ENCODE measurements at regions of chr14 and their contacts with region 1.

Region 1: DNA sequence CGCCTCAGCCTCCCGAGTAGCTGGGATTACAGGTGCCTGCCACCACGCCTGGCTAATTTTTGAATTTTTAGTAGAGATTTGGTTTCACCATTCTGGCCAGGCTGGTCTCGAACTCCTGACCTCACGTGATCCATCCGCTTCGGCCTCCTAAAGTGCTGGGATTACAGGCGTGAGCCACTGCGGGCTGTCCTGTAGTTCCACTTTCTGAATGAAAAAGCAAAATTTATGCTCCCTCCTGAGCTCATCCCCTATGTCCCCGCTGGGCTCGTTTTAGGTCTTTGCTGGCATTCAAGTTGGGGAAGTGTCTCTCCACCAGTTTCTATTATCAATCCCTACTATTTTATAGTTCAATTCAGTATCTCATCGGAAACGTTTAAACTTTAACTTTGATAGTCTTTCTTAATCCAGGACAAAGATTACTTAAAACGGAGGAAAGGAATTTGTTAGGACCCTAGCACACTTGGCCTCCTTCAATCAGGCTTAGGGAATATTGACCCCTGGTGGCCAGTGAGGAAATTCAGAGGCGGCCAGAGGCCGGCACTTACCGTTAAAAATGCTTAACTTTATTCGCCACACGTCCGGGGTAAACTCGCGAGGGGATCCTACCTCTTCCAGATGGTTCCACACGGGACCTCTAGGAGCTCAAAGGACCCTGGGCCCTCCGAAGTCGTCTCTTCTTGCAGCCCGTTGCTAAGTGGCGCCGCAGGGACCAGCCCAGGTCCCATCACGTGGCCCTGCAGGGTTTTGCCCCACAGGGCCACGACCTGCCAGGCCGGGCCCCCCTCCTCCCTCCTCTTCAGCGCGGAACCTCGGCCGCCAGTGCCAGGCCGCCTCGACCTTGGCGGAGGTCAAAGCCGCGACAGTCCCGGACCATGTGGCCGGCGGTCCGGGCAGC is 11.4 kb upstream of the DNAL1 start:
- DNase-seq: peak; percentile 59
- ATAC-seq: peak; percentile 88
- H3K4me3 ChIP-seq: peak overlapping the region; percentile 49 to 68 (median 51)
- H3K27ac ChIP-seq: no peak overlapping the region
- H3K4me1 ChIP-seq: peaks cover 32% of the 10 kb centered on the region
- H3K27me3 ChIP-seq: no peaks in the 10 kb centered on the region
- CTCF ChIP-seq: peak; percentile 83
- EP300 ChIP-seq: no peak
- POLR2A ChIP-seq: no peak
- RAD21 ChIP-seq: peak; percentile 81

Region 2: GRCh38 chr14:73452341-73453186 is 180.8 kb before region 1 on chr14:
- CTCF ChIA-PET with region 1: no interaction called
- POLR2A ChIA-PET with region 1: no interaction called
- in situ Hi-C with region 1: no loop called
- intact Hi-C with region 1: no loop called
- DNase-seq: no peak
- ATAC-seq: no peak
- H3K4me3 ChIP-seq: no peak overlapping the region
- H3K27ac ChIP-seq: no peak overlapping the region
- H3K4me1 ChIP-seq: peaks cover 22% of the 10 kb centered on the region
- H3K27me3 ChIP-seq: no peaks in the 10 kb centered on the region; a peak in 1 of 5 replicates
- CTCF ChIP-seq: no peak
- EP300 ChIP-seq: no peak
- POLR2A ChIP-seq: no peak
- RAD21 ChIP-seq: no peak

Region 3: GRCh38 chr14:73503648-73504047 is 129.7 kb before region 1 on chr14:
- CTCF ChIA-PET with region 1: interaction called, 8 read pairs
- POLR2A ChIA-PET with region 1: interaction called, 3 read pairs
- in situ Hi-C with region 1: loop called (anchors 5 kb)
- intact Hi-C with region 1: loop called (anchors 2 kb)
- DNase-seq: no peak
- ATAC-seq: no peak
- H3K4me3 ChIP-seq: no peak overlapping the region
- H3K27ac ChIP-seq: no peak overlapping the region
- H3K4me1 ChIP-seq: 0 out of 2 replicates have a peak, but pooled peaks cover 6% of the 10 kb centered on the region
- H3K27me3 ChIP-seq: no peaks in the 10 kb centered on the region
- CTCF ChIP-seq: no peak
- EP300 ChIP-seq: no peak
- POLR2A ChIP-seq: no peak
- RAD21 ChIP-seq: no peak

Region 4: DNA sequence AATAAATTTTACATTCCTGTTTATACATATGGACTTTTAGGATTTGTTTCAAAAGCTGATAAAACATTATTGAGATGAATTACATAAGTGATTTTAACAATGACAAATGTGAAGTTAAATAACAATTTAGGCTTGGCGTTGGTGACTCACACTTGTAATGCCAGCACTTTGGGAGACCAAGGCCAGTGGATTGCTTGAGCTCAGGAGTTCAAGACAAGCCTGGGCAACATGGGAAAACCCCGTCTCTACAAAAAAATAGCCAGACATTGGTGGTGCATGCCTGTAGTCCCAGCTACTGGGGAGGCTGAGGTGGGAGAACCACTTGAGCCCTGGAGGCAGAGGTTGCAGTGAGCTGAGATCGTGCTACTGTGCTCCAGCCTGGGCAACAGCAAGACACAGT is 57.0 kb before region 1 on chr14:
- CTCF ChIA-PET with region 1: no interaction called
- POLR2A ChIA-PET with region 1: no interaction called
- in situ Hi-C with region 1: loop called (anchors 10 kb)
- intact Hi-C with region 1: loop called (anchors 10 kb)
- DNase-seq: no peak
- ATAC-seq: no peak
- H3K4me3 ChIP-seq: no peak overlapping the region
- H3K27ac ChIP-seq: no peak overlapping the region
- H3K4me1 ChIP-seq: peaks cover 4% of the 10 kb centered on the region
- H3K27me3 ChIP-seq: no peaks in the 10 kb centered on the region
- CTCF ChIP-seq: no peak
- EP300 ChIP-seq: no peak
- POLR2A ChIP-seq: no peak
- RAD21 ChIP-seq: no peak

Region 5: GRCh38 chr14:73591690-73592448 is 41.5 kb before region 1 on chr14 and contains the start of gene ACOT4:
- CTCF ChIA-PET with region 1: no interaction called
- POLR2A ChIA-PET with region 1: no interaction called
- in situ Hi-C with region 1: no loop called
- intact Hi-C with region 1: no loop called
- DNase-seq: no peak
- ATAC-seq: peak; percentile 33; the same call in 1 of the 3 replicates
- H3K4me3 ChIP-seq: peak within 1 kb of the TSS in 1 of 3 experiments; percentile 28; a peak in 1 of 6 replicates
- H3K27ac ChIP-seq: no peak within 1 kb of the TSS
- H3K4me1 ChIP-seq: no peaks in the 10 kb centered on the region
- H3K27me3 ChIP-seq: no peaks in the 10 kb centered on the region
- CTCF ChIP-seq: peak; percentile 29
- EP300 ChIP-seq: no peak
- POLR2A ChIP-seq: no peak
- RAD21 ChIP-seq: no peak
- total RNA-seq, gene ACOT4: 0.04 TPM in 1 of 2 replicates, not detected in the other

Measured in HepG2 (cell line).